HCT116 (cell line): ENCODE measurements at regions of chr20 and their contacts with region 1.

Region 1: GRCh38 chr20:50987592-50988210 is 29.1 kb downstream of the MOCS3 start:
- DNase-seq: peak; percentile 92
- ATAC-seq: peak; percentile 97
- H3K4me3 ChIP-seq: peak overlapping the region; percentile 34 to 36
- H3K27ac ChIP-seq: no peak overlapping the region
- H3K4me1 ChIP-seq: peaks cover 0 to 10% of the 10 kb centered on the region in 2 experiments; a peak in 1 of 4 replicates
- H3K27me3 ChIP-seq: no peaks in the 10 kb centered on the region
- CTCF ChIP-seq: peak; percentile 80 to 89 (median 86)
- POLR2A ChIP-seq: no peak
- RAD21 ChIP-seq: peak; percentile 96

Region 2: GRCh38 chr20:50939711-50940110 is 48.0 kb before region 1 on chr20:
- CTCF ChIA-PET with region 1: no interaction called
- POLR2A ChIA-PET with region 1: no interaction called
- RAD21 ChIA-PET with region 1: no interaction called
- intact Hi-C with region 1: no loop called
- DNase-seq: no peak
- ATAC-seq: no peak
- H3K4me3 ChIP-seq: no peak overlapping the region
- H3K27ac ChIP-seq: no peak overlapping the region
- H3K4me1 ChIP-seq: no peaks in the 10 kb centered on the region
- H3K27me3 ChIP-seq: no peaks in the 10 kb centered on the region
- CTCF ChIP-seq: no peak
- POLR2A ChIP-seq: no peak
- RAD21 ChIP-seq: no peak

Region 3: GRCh38 chr20:51306503-51307358 is 319.0 kb after region 1 on chr20:
- CTCF ChIA-PET with region 1: interaction called, 106 read pairs
- POLR2A ChIA-PET with region 1: interaction called, 15 read pairs
- RAD21 ChIA-PET with region 1: interaction called, 10 to 15 read pairs
- intact Hi-C with region 1: loop called (anchors 1 kb)
- DNase-seq: peak; percentile 62
- ATAC-seq: peak; percentile 100
- H3K4me3 ChIP-seq: no peak overlapping the region
- H3K27ac ChIP-seq: no peak overlapping the region; the same call in 1 of the 2 replicates
- H3K4me1 ChIP-seq: peaks cover 0 to 7% of the 10 kb centered on the region in 2 experiments; a peak in 1 of 4 replicates
- H3K27me3 ChIP-seq: no peaks in the 10 kb centered on the region
- CTCF ChIP-seq: peak; percentile 85 to 95 (median 88)
- POLR2A ChIP-seq: no peak
- RAD21 ChIP-seq: peak; percentile 99

Region 4: DNA sequence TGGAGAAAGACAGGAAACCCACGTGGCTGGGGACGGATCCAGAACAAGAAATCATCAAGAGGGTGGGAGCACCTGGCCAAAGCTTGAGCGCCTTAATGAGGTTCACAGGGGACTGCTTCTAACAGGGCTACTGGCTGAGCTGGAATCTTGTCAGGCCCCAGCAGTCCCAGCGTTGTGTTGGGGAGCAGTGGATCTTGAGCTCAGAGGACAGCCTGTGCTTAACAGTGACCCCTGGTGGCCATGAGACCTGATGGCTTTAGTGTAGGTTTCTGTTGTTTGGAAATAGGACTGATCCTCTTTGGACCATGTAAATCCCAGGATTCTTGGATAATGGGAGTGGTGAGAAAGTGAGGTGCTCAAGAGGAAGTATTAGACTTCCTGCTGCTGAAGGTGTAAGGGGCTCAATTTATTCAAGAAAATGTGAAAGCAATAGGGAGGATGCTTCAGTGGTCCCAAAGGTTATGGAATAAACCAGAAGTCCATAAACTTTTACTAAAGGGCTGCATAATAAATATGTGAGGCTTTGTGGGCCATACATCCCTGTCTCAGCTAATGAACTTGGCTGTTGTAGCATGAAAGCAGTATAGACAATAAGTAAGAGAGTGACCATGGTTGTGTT is 338.6 kb after region 1 on chr20:
- CTCF ChIA-PET with region 1: interaction called, 56 read pairs
- POLR2A ChIA-PET with region 1: interaction called, 4 read pairs
- RAD21 ChIA-PET with region 1: interaction called, 4 to 10 read pairs
- intact Hi-C with region 1: loop called (anchors 1 kb)
- DNase-seq: peak; percentile 54
- ATAC-seq: peak; percentile 93
- H3K4me3 ChIP-seq: no peak overlapping the region
- H3K27ac ChIP-seq: no peak overlapping the region
- H3K4me1 ChIP-seq: no peaks in the 10 kb centered on the region
- H3K27me3 ChIP-seq: no peaks in the 10 kb centered on the region
- CTCF ChIP-seq: peak; percentile 51 to 86 (median 73); a peak in 5 of 6 replicates
- POLR2A ChIP-seq: no peak
- RAD21 ChIP-seq: peak; percentile 56

Region 5: DNA sequence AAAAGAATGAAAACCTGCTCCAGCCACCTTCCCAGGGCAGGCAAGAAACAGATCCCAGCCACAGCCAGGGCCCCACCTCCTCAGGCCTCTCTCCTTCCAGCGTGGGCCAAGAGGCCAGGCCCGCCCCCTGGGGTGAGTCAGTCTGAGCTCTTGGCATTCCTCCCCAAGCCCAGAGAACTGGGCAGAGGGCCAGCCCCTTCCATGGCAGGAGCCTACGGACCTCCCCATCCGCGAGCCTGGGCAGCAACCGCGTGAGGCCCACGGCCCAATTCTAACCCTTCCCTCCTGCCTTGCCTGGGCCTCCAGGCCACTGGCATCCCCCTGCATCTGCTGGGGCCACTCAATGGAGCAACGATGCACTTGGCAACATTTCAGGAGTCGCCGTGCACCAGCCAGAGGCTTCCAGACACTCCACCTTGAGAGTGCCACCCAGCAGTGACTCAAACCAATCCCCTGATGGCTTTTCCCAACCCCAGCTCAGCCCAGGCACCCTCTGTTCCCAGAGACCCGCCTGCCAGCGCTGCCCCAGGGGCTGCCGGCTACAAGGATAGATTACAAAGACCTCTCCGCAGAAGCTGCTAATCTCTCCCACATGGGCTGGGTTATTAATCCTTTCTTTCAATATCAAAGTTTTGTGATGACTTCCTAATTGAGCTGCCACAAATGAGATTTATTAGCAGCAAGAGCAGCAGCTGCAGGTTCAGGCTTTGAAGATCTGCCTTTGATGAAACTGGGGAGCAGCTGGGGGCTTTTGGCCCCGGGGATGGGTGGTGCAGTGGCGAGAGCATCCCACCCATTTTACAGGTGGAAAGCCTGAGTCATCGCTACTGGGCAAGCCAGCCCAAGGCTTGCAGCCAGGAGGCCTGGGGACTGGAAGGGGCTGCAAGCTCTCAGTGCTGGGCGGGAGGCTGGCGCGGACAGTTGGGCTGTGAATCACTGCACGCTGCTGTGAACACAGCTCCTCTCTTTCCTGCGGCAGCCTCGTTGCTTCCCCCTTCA is 469.1 kb after region 1 on chr20:
- CTCF ChIA-PET with region 1: interaction called, 12 read pairs
- POLR2A ChIA-PET with region 1: no interaction called
- RAD21 ChIA-PET with region 1: no interaction called
- intact Hi-C with region 1: no loop called
- DNase-seq: peak; percentile 88
- ATAC-seq: peak; percentile 91
- H3K4me3 ChIP-seq: peak overlapping the region; percentile 46 to 62
- H3K27ac ChIP-seq: peak overlapping the region; percentile 66
- H3K4me1 ChIP-seq: peaks cover 18 to 23% of the 10 kb centered on the region in 2 experiments
- H3K27me3 ChIP-seq: no peaks in the 10 kb centered on the region
- CTCF ChIP-seq: no peak
- POLR2A ChIP-seq: no peak
- RAD21 ChIP-seq: no peak

Region 6: GRCh38 chr20:51624157-51624731 is 636.5 kb after region 1 on chr20:
- CTCF ChIA-PET with region 1: interaction called, 14 read pairs
- POLR2A ChIA-PET with region 1: no interaction called
- RAD21 ChIA-PET with region 1: interaction called in 1 of 2 experiments, 5 read pairs
- intact Hi-C with region 1: loop called (anchors 1 kb)
- DNase-seq: peak; percentile 61
- ATAC-seq: peak; percentile 90
- H3K4me3 ChIP-seq: no peak overlapping the region
- H3K27ac ChIP-seq: no peak overlapping the region
- H3K4me1 ChIP-seq: peaks cover 7 to 13% of the 10 kb centered on the region in 2 experiments
- H3K27me3 ChIP-seq: no peaks in the 10 kb centered on the region
- CTCF ChIP-seq: peak; percentile 76 to 89 (median 77)
- POLR2A ChIP-seq: no peak
- RAD21 ChIP-seq: peak; percentile 72